ENCODE measurements at regions of chr18 and their contacts with region 1.

Region 1: GRCh38 chr18:68083131-68083530 is 566.6 kb upstream of the DSEL start:
- DNase-seq: no peak
- H3K4me3 ChIP-seq: no peak overlapping the region
- H3K4me3 Mint-ChIP-seq: no peak overlapping the region
- H3K27ac ChIP-seq: no peak overlapping the region
- H3K27ac Mint-ChIP-seq: no peak overlapping the region
- H3K4me1 ChIP-seq: no peaks in the 10 kb centered on the region
- H3K4me1 Mint-ChIP-seq: no peaks in the 10 kb centered on the region
- H3K27me3 ChIP-seq: no peaks in the 10 kb centered on the region
- H3K27me3 Mint-ChIP-seq: no peaks in the 10 kb centered on the region

Region 2: DNA sequence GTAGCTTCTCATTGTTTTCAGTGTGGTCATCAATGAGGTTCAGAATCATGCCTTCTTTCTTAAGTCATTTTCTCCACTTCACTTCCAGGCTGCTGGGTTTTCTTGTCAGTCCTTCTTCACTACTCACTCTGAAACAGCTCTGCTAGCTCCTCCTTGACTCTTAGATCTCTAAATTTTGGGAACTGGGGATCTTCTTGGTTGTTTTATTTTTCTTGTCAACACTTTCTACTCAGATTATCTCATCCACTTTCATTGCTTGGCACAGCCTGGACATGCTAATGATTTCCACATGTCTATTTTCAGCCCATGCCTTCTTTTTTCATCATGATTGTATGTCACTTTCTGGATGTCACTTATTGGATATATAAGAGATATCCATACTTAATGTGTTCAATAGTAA is 48.8 kb before region 1 on chr18:
- CTCF ChIA-PET with region 1: no interaction called
- POLR2A ChIA-PET with region 1: no interaction called
- intact Hi-C with region 1: loop called (anchors 5 kb)
- DNase-seq: no peak
- H3K4me3 ChIP-seq: no peak overlapping the region
- H3K4me3 Mint-ChIP-seq: no peak overlapping the region
- H3K27ac ChIP-seq: no peak overlapping the region
- H3K27ac Mint-ChIP-seq: no peak overlapping the region
- H3K4me1 ChIP-seq: no peaks in the 10 kb centered on the region
- H3K4me1 Mint-ChIP-seq: no peaks in the 10 kb centered on the region
- H3K27me3 ChIP-seq: no peaks in the 10 kb centered on the region
- H3K27me3 Mint-ChIP-seq: no peaks in the 10 kb centered on the region

Region 3: DNA sequence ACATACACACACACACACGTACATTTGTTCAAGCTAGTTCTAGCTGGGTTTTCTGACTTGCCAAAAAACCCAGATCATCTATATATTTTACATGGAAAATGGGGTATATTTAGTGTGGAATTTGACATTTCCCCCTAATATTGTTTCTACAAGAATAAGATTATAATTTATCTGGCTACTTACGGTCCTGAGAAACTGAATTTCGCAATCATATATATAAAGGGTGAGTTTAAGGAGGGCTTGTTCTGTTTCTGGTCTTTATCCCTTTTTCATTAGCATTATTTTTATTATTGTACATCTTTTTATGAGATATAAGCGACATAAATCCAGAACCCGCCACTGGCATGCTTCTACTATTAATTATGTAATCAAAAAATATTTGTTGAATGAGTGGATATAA is 102.9 kb after region 1 on chr18:
- CTCF ChIA-PET with region 1: no interaction called
- POLR2A ChIA-PET with region 1: no interaction called
- intact Hi-C with region 1: no loop called
- DNase-seq: no peak
- H3K4me3 ChIP-seq: no peak overlapping the region
- H3K4me3 Mint-ChIP-seq: no peak overlapping the region
- H3K27ac ChIP-seq: no peak overlapping the region
- H3K27ac Mint-ChIP-seq: no peak overlapping the region
- H3K4me1 ChIP-seq: no peaks in the 10 kb centered on the region
- H3K4me1 Mint-ChIP-seq: no peaks in the 10 kb centered on the region
- H3K27me3 ChIP-seq: no peaks in the 10 kb centered on the region
- H3K27me3 Mint-ChIP-seq: no peaks in the 10 kb centered on the region